ENCODE measurements at regions of chr10 and their contacts with region 1.

Region 1: GRCh38 chr10:86585037-86585725 is 63.6 kb upstream of the WAPL start:
- DNase-seq: peak; percentile 67
- ATAC-seq: peak; percentile 97
- H3K4me3 Mint-ChIP-seq: no peak overlapping the region
- H3K27ac Mint-ChIP-seq: no peak overlapping the region
- H3K4me1 Mint-ChIP-seq: no peaks in the 10 kb centered on the region
- H3K27me3 Mint-ChIP-seq: peaks cover 10% of the 10 kb centered on the region
- CTCF ChIP-seq: peak; percentile 62

Region 2: DNA sequence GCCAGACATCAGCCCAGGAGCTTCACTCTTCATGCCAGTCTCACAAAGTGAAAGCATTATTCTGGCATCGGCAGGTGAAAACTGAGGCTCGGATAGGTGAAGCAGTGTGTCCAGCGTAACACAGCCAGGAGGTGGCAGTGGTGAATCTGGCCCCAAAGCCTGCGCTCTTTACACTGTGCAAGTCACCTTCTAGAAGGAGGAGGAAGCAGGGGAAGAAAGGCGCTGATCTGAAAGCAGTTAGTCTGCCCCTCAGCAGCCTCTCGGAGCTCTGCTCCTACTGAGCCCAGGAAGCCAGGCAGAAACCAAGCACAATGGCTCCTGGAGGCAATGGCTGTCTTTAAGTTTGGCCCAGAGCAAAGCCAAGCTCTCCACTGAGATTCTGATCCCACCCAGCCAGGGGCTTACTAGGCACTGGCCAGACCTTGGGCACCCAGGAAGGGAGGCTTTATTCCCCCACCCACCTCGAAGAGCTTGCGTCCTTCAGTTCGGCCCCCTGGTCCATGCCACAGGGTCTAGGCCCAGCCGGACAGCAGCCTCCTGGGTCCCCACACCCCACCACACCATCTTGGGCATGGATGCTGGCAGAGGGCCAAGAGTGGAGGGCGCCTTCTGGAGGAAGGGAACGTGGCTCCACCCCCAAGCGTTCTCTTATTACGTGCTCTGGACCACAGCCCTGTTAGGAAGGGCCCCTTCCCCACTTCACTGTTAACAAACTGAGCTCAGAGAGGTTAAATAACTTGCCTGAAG is 323.1 kb before region 1 on chr10:
- CTCF ChIA-PET with region 1: no interaction called
- POLR2A ChIA-PET with region 1: no interaction called
- intact Hi-C with region 1: loop called (anchors 5 kb)
- DNase-seq: no peak
- ATAC-seq: no peak
- H3K4me3 Mint-ChIP-seq: no peak overlapping the region
- H3K27ac Mint-ChIP-seq: no peak overlapping the region
- H3K4me1 Mint-ChIP-seq: peaks cover 3% of the 10 kb centered on the region
- H3K27me3 Mint-ChIP-seq: peaks cover 35% of the 10 kb centered on the region
- CTCF ChIP-seq: no peak

Region 3: DNA sequence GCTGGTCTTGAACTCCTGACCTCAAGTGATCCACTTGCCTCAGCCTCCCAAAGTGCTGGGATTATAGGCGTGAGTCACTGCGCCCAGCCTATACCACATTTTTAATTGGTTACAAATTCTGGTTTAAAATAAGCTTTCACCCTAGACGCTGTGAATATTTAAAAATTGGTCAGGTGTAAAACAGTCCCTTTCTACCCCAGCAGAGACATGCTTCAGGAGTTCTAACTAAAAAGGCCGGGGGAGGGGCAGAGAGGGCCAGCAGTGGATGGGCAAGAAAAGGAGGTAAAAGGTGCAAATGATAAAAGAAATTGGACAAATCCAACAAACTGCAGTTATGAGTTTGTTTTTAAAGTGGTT is 133.6 kb before region 1 on chr10:
- CTCF ChIA-PET with region 1: no interaction called
- POLR2A ChIA-PET with region 1: no interaction called
- intact Hi-C with region 1: loop called (anchors 5 kb)
- DNase-seq: no peak
- ATAC-seq: peak; percentile 31
- H3K4me3 Mint-ChIP-seq: no peak overlapping the region
- H3K27ac Mint-ChIP-seq: no peak overlapping the region
- H3K4me1 Mint-ChIP-seq: peaks cover 41% of the 10 kb centered on the region
- H3K27me3 Mint-ChIP-seq: no peaks in the 10 kb centered on the region
- CTCF ChIP-seq: no peak

Region 4: GRCh38 chr10:86613905-86614304 is 28.7 kb after region 1 on chr10:
- CTCF ChIA-PET with region 1: no interaction called
- POLR2A ChIA-PET with region 1: no interaction called
- intact Hi-C with region 1: no loop called
- DNase-seq: no peak
- ATAC-seq: no peak
- H3K4me3 Mint-ChIP-seq: no peak overlapping the region
- H3K27ac Mint-ChIP-seq: no peak overlapping the region
- H3K4me1 Mint-ChIP-seq: no peaks in the 10 kb centered on the region
- H3K27me3 Mint-ChIP-seq: peaks cover 19% of the 10 kb centered on the region
- CTCF ChIP-seq: no peak

Measured in activated B cell treated with CpG ODN at 0.5 μM for 24 hours (primary cell).